Activated T-helper 1 cell treated with anti-CD3 and anti-CD28 coated beads, Interleukin-12 subunit alpha, Interleukin-12 subunit beta, Interleukin-2, Interleukin-4 antibody, amounts not matched to agents 30 ng/mL and 10 ng/mL and 1 ng/mL, durations not matched to agents 14 hours and 24 hours and 36 hours (primary cell): ENCODE measurements at regions of chr11 and their contacts with region 1.

Region 1: GRCh38 chr11:93543292-93543977 is at the start of gene SMCO4:
- DNase-seq: peak; percentile 67
- H3K4me3 Mint-ChIP-seq: peak within 1 kb of the TSS; percentile 93
- H3K27ac Mint-ChIP-seq: peak within 1 kb of the TSS; percentile 85
- H3K4me1 Mint-ChIP-seq: peaks cover 28% of the 10 kb centered on the region
- H3K27me3 Mint-ChIP-seq: peaks cover 3% of the 10 kb centered on the region
- total RNA-seq, gene SMCO4: 33.4 and 34.8 TPM in 2 replicates

Region 2: DNA sequence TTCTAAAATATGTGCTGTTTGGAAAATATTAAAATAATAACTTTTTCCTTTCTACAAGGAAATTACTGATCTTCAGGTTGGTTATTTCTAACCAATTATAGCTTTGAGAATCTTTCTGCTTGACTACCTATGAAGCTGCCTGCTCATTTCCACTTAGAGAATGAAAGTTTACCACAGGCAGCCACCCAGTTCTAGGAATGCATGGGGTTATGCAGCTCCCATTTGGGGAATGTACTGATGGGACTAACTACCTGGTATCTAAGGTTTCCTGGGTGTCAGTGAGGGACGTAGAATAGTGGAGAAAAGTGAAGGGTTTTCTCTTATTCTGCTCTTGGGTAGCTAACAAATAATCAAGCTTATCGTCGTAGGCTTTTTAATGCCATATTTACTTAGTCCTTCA is 139.5 kb before region 1 on chr11:
- intact Hi-C with region 1: loop called (anchors 5 kb)
- DNase-seq: no peak
- H3K4me3 Mint-ChIP-seq: no peak overlapping the region
- H3K27ac Mint-ChIP-seq: no peak overlapping the region
- H3K4me1 Mint-ChIP-seq: no peaks in the 10 kb centered on the region
- H3K27me3 Mint-ChIP-seq: peaks cover 7% of the 10 kb centered on the region

Region 3: GRCh38 chr11:93529707-93530467 is 13.5 kb before region 1 on chr11:
- intact Hi-C with region 1: loop called (anchors 1 kb)
- DNase-seq: no peak
- H3K4me3 Mint-ChIP-seq: peak overlapping the region; percentile 3
- H3K27ac Mint-ChIP-seq: peak overlapping the region; percentile 63
- H3K4me1 Mint-ChIP-seq: peaks cover 84% of the 10 kb centered on the region
- H3K27me3 Mint-ChIP-seq: no peaks in the 10 kb centered on the region

Region 4: DNA sequence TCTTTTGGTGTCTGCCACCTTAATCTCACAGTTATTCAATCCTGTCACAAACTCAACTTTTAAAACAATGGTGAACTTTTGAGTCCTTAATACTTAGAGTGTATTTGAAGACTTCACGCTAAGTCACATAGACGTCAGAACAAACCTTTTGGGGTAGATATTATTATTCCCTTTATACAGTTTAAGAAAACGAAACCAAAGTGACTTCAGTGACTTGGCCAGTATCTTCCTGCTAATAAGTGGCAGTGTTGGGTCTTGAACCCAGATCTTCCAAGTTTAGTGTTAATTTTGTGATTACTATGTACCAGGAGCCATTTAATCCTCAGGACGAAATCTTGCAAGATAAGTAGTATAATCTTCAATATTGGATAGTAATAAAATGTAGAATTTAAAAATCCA is 118.7 kb after region 1 on chr11:
- intact Hi-C with region 1: loop called (anchors 2 kb)
- DNase-seq: no peak
- H3K4me3 Mint-ChIP-seq: peak overlapping the region; percentile 89
- H3K27ac Mint-ChIP-seq: peak overlapping the region; percentile 86
- H3K4me1 Mint-ChIP-seq: peaks cover 47% of the 10 kb centered on the region
- H3K27me3 Mint-ChIP-seq: no peaks in the 10 kb centered on the region

Region 5: GRCh38 chr11:94128746-94129511 is 585.5 kb after region 1 on chr11 and contains the start of gene PANX1:
- intact Hi-C with region 1: loop called (anchors 5 kb)
- DNase-seq: peak; percentile 73
- H3K4me3 Mint-ChIP-seq: no peak within 1 kb of the TSS
- H3K27ac Mint-ChIP-seq: peak within 1 kb of the TSS; percentile 88
- H3K4me1 Mint-ChIP-seq: peaks cover 20% of the 10 kb centered on the region
- H3K27me3 Mint-ChIP-seq: no peaks in the 10 kb centered on the region
- total RNA-seq, gene PANX1: 20.8 and 21.9 TPM in 2 replicates